Body of pancreas (tissue), 4 donors: ENCODE measurements at regions of chr2 and their contacts with region 1.

Region 1: DNA sequence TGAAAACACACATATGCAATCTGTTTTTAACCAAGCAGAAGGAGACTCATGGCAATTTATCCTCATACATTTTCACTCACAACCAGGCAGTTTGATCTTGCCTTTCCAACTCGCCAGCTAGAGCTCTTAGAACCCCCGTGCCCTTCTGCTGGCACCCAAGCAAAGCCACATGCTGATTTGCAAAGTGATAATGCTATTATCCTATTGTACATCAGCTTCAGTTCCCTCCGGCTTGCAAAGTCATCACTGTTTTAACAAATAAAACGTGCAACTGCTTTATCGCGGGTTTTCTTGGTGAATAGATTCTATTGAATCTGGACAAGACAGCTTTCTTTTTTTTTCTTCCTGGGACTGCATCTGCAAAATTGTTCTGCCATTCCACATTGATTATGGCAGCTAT is 314.6 kb downstream of the LNPK start:
- DNase-seq: no peak
- ATAC-seq: no peak
- H3K4me3 ChIP-seq: no peak overlapping the region
- H3K27ac ChIP-seq: no peak overlapping the region
- H3K4me1 ChIP-seq: no peaks in the 10 kb centered on the region
- H3K27me3 ChIP-seq: no peaks in the 10 kb centered on the region
- CTCF ChIP-seq: no peak
- POLR2A ChIP-seq: no peak

Region 2: GRCh38 chr2:176096986-176097819 is 409.7 kb after region 1 on chr2:
- intact Hi-C with region 1: loop called (anchors 5 kb)
- DNase-seq: peak; percentile 69 to 80 (median 73)
- ATAC-seq: peak; percentile 87
- H3K4me3 ChIP-seq: peak overlapping the region in 1 of 2 donors; percentile 1
- H3K27ac ChIP-seq: no peak overlapping the region
- H3K4me1 ChIP-seq: peaks cover 38% of the 10 kb centered on the region
- H3K27me3 ChIP-seq: peaks cover 0 to 62% of the 10 kb centered on the region in 2 donors
- CTCF ChIP-seq: peak; percentile 69 to 93 (median 87)
- POLR2A ChIP-seq: no peak